Mammary epithelial cell (primary cell): ENCODE measurements at regions of chr10 and their contacts with region 1.

Region 1: DNA sequence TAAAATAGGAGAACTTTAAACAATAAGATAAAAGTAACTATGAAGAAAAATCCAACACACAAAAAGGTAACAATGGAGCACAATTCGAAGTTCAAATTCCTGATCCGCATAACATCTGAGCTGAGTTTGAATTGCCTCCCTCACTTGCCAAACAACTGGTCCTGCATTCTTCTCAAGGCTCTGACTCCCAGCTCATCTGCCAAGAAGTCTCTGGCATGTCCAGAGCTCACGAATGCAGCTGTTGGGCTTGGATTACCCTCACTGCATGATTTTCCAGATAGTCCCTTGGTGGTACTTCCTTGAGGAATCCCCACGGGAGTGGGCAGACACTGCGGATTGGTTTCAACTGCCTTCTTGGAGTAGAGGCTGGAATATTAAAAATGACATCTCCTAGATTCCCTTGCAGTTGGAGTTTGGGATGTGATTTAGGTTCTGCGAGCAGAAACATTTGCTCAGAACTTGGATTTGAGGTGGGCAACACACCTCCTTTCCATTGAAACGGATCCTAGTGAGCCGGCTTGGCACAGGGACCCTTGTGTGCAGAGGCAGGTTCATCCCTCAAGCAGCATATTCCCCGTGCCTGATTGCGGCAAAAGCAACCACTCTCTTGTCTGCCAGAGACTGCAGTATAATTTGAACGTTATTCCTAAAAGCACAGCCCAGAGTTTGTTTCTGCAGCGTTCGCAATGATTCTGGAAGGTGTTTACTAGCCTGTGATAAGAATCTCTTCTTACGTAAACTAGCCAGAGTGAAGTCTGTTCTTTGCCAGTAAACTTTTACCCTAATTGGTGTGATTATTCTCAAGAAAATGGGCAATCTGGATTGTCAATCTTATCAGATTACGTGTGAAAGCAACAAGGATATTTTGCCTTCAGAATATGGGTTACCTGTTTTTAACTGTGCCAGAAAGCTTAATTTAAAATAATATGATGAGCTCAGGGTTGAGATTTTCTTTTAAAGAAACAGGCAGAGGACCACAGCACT is 23.4 kb upstream of the PRKCQ start:
- DNase-seq: no peak
- H3K4me3 ChIP-seq: no peak overlapping the region
- H3K27ac ChIP-seq: no peak overlapping the region
- H3K4me1 ChIP-seq: no peaks in the 10 kb centered on the region
- H3K27me3 ChIP-seq: no peaks in the 10 kb centered on the region
- CTCF ChIP-seq: no peak

Region 2: DNA sequence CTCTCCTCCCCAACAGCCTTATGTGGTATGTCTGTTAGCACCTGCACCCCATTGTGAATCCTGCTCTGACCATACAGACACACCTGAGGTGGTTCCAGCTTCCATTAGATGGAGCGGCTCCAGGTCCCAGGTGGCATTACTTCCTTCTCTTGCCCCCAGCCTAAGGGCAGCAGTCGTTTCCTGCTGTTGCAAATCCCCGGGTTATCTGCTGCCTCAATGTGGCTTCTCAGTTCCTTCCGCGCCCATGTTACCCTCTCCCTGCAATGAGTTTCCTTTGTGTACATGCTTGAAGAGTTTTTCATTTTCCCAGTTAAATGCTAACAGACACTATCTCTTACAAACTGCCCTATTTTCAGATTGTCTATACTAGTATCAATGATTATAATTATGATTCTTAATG is 39.4 kb after region 1 on chr10:
- CTCF ChIA-PET with region 1: no interaction called
- dilution Hi-C with region 1: loop called (anchors 5 kb)
- in situ Hi-C with region 1: no loop called
- intact Hi-C with region 1: no loop called
- DNase-seq: no peak
- H3K4me3 ChIP-seq: no peak overlapping the region
- H3K27ac ChIP-seq: no peak overlapping the region
- H3K4me1 ChIP-seq: no peaks in the 10 kb centered on the region
- H3K27me3 ChIP-seq: no peaks in the 10 kb centered on the region
- CTCF ChIP-seq: no peak

Region 3: GRCh38 chr10:6694447-6695140 is 91.2 kb after region 1 on chr10:
- CTCF ChIA-PET with region 1: no interaction called
- dilution Hi-C with region 1: loop called (anchors 5 kb)
- in situ Hi-C with region 1: no loop called
- intact Hi-C with region 1: no loop called
- DNase-seq: peak; percentile 41
- H3K4me3 ChIP-seq: no peak overlapping the region
- H3K27ac ChIP-seq: no peak overlapping the region
- H3K4me1 ChIP-seq: no peaks in the 10 kb centered on the region
- H3K27me3 ChIP-seq: no peaks in the 10 kb centered on the region
- CTCF ChIP-seq: no peak

Region 4: GRCh38 chr10:7111561-7111960 is 508.1 kb after region 1 on chr10:
- CTCF ChIA-PET with region 1: no interaction called
- dilution Hi-C with region 1: no loop called
- in situ Hi-C with region 1: no loop called
- intact Hi-C with region 1: no loop called
- DNase-seq: peak; percentile 86
- H3K4me3 ChIP-seq: no peak overlapping the region
- H3K27ac ChIP-seq: no peak overlapping the region
- H3K4me1 ChIP-seq: no peaks in the 10 kb centered on the region
- H3K27me3 ChIP-seq: no peaks in the 10 kb centered on the region
- CTCF ChIP-seq: no peak

Region 5: GRCh38 chr10:7397049-7398035 is 793.9 kb after region 1 on chr10:
- CTCF ChIA-PET with region 1: no interaction called
- dilution Hi-C with region 1: no loop called
- in situ Hi-C with region 1: no loop called
- intact Hi-C with region 1: no loop called
- DNase-seq: no peak
- H3K4me3 ChIP-seq: no peak overlapping the region
- H3K27ac ChIP-seq: no peak overlapping the region
- H3K4me1 ChIP-seq: no peaks in the 10 kb centered on the region
- H3K27me3 ChIP-seq: no peaks in the 10 kb centered on the region
- CTCF ChIP-seq: no peak